ENCODE measurements at regions of chr15 and their contacts with region 1.

Region 1: DNA sequence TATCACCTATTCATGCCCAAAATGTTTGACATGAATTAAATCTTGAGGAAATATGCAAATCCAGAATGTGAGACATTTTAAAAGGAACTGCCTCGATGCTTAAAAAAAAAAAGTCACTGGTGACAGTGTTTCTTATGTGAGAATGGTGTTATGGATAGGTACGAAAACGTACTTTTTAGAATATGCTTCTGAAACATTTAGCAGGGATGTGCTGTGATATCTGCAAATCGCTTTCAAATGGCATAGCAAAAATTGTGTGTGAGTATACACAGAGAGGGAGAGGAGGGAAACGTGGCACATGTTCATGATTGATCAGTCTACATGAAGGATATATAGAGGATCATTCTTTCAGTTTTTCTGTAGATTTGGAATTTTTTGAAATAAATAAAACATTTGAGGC is 16.0 kb downstream of the CCNB2 start:
- DNase-seq: no peak
- ATAC-seq: no peak
- H3K4me3 Mint-ChIP-seq: no peak overlapping the region
- H3K27ac Mint-ChIP-seq: no peak overlapping the region
- H3K4me1 Mint-ChIP-seq: no peaks in the 10 kb centered on the region
- H3K27me3 Mint-ChIP-seq: no peaks in the 10 kb centered on the region

Region 2: GRCh38 chr15:59410391-59410896 is 289.5 kb after region 1 on chr15:
- CTCF ChIA-PET with region 1: no interaction called
- POLR2A ChIA-PET with region 1: interaction called, 12 read pairs
- intact Hi-C with region 1: no loop called
- DNase-seq: no peak
- ATAC-seq: no peak
- H3K4me3 Mint-ChIP-seq: no peak overlapping the region
- H3K27ac Mint-ChIP-seq: no peak overlapping the region
- H3K4me1 Mint-ChIP-seq: peaks cover 14% of the 10 kb centered on the region
- H3K27me3 Mint-ChIP-seq: peaks cover 3% of the 10 kb centered on the region

Measured in activated CD4-positive, alpha-beta T cell treated with anti-CD3 and anti-CD28 coated beads for 36 hours (primary cell).